GM12878 (cell line): ENCODE measurements at regions of chr4 and their contacts with region 1.

Region 1: GRCh38 chr4:53150631-53151488 is 215.0 kb downstream of the SCFD2 start:
- DNase-seq: no peak
- ATAC-seq: no peak
- H3K4me3 ChIP-seq: no peak overlapping the region
- H3K27ac ChIP-seq: no peak overlapping the region
- H3K4me1 ChIP-seq: no peaks in the 10 kb centered on the region
- H3K27me3 ChIP-seq: no peaks in the 10 kb centered on the region
- CTCF ChIP-seq: no peak
- EP300 ChIP-seq: no peak
- POLR2A ChIP-seq: no peak
- RAD21 ChIP-seq: no peak

Region 2: DNA sequence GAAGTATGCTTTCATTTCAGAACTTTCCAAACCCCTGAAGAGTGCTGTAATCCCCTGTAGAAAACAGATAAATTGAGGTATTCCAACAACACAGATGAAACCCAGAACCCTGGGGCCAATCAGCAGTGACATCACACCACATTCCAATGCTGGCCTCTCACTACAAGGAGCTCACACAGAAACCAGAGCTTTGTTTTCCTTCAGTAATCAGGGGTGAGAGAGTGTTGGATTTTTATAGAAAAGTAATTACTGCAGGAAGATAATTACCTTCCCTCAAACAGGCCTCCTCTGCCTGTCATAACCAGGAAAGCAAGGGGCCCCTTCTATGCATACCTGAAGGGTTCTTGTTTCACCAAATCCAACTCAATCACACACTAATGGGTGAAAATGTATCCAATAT is 31.2 kb before region 1 on chr4:
- CTCF ChIA-PET with region 1: no interaction called
- POLR2A ChIA-PET with region 1: no interaction called
- RAD21 ChIA-PET with region 1: no interaction called
- SMC1A ChIA-PET with region 1: no interaction called
- in situ Hi-C with region 1: no loop called
- intact Hi-C with region 1: no loop called
- DNase-seq: no peak
- ATAC-seq: no peak
- H3K4me3 ChIP-seq: no peak overlapping the region
- H3K27ac ChIP-seq: no peak overlapping the region
- H3K4me1 ChIP-seq: no peaks in the 10 kb centered on the region
- H3K27me3 ChIP-seq: no peaks in the 10 kb centered on the region
- CTCF ChIP-seq: no peak
- EP300 ChIP-seq: no peak
- POLR2A ChIP-seq: no peak
- RAD21 ChIP-seq: no peak

Region 3: DNA sequence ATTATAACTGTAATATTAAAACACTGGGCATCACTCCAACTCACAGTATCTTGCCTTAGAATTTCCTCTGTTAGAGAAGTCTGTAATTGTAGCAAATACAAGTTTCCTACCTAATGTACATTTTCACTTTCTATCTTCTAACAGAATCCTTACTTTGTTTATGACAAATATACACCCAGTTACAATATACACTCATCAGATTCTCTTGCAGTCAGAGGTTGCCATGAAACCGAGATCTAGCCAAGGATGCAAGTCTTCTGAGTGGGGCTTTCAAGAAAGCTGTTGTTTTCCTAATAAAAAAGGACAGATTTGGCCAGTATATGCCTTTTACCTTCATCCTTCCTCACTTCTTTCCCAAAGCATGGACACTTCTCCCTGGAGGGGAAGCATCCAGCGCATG is 13.9 kb before region 1 on chr4:
- CTCF ChIA-PET with region 1: interaction called, 3 read pairs
- POLR2A ChIA-PET with region 1: no interaction called
- RAD21 ChIA-PET with region 1: no interaction called
- SMC1A ChIA-PET with region 1: no interaction called
- in situ Hi-C with region 1: no loop called
- intact Hi-C with region 1: loop called (anchors 1 kb)
- DNase-seq: no peak
- ATAC-seq: no peak
- H3K4me3 ChIP-seq: no peak overlapping the region
- H3K27ac ChIP-seq: no peak overlapping the region
- H3K4me1 ChIP-seq: no peaks in the 10 kb centered on the region
- H3K27me3 ChIP-seq: no peaks in the 10 kb centered on the region
- CTCF ChIP-seq: no peak
- EP300 ChIP-seq: no peak
- POLR2A ChIP-seq: no peak
- RAD21 ChIP-seq: no peak